CD4-positive, alpha-beta memory T cell (primary cell): ENCODE measurements at regions of chr1 and their contacts with region 1.

Region 1: DNA sequence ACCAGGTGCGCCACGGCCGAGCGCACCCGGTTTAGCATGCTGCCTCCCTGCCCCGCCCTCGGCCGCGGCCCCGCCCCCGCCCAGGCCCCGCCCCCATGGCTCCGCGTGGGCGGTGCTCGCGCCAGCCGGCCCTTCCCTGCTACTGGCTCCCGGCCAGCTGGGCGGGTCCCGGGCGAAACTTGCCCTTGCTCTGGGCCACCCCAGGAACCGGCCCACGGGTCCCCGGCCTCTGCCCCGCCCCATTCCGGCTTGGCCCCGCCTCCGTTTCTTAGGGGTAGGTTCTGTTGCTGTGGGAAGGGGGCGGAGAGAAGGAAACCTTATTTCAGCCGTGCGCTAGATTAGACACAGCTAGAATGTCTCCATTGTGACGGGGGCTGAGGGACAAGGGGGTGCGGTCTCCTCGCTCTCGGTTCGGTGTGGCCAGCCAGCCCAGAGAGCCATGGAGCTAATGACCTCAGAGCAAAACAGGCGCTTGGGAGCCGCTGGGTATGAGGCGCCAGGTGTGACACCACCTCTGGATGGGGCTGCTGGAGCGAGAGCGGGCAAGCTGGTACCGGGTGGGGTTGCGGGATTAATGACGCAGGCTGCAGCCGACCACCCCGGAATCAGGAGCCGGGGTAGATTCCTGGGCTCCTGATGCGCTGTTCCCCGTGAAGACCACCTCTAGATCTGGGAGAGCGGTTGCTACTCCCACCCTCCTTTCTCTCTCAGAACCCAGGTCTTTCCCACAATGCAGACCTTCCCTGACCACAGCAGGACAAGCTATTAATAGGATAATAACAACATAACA is at the start of gene PPM1J:
- DNase-seq: peak; percentile 96 to 97 (median 97)
- H3K4me3 ChIP-seq: peak within 1 kb of the TSS; percentile 58 to 72
- H3K4me3 Mint-ChIP-seq: peak within 1 kb of the TSS; percentile 81 to 96 (median 93)
- H3K27ac ChIP-seq: peak within 1 kb of the TSS; percentile 43
- H3K27ac Mint-ChIP-seq: peak within 1 kb of the TSS; percentile 81 to 96 (median 93)
- H3K4me1 ChIP-seq: peaks cover 22% of the 10 kb centered on the region
- H3K4me1 Mint-ChIP-seq: peaks cover 12 to 29% (median 19%) of the 10 kb centered on the region in 4 donors
- H3K27me3 ChIP-seq: peaks cover 8% of the 10 kb centered on the region
- H3K27me3 Mint-ChIP-seq: peaks cover 0 to 2% of the 10 kb centered on the region in 2 donors
- total RNA-seq, gene PPM1J: 0.76 TPM in 1 of 2 experiments, not detected in the other

Region 2: DNA sequence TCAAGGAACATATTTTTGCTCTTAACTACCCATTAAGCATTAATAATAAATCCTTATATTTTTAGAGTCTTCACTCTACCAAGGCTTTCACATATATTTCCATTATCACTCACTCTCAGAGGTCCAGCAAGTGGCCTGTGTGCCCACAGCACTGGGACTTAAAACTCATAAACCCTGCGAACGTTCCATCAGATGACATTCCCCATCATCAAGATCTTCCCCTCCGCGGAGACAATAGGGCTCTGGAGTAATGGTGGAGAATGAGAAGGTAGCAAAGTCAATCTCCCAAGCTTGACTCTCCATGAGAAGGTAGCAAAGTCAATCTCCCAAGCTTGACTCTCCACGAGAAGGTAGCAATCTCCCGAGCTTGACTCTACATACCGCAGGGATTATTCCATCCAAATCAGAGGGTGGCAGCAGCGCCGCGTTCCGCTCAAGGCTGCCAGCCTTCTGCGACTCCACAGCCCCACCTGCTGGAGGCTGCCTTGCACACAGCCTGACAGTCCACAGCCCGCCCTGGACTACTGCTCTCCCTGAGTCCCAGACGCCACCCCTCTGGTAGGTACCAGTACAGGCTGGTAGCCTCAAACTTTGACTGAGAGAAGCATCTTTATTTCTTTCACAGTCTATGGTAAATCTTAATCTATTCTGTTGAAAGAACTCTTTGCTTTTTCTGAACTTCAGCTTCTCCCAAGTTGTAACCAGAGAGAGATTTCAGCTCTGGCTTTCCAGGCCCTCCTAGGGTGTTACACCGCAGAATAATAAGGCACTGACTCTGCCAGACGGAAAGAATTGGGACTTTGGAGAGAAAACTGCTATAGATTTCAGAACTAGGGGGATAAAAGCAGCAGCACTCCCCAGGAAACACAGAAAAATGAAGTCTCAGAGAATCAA is 345.8 kb before region 1 on chr1:
- CTCF ChIA-PET with region 1: no interaction called
- POLR2A ChIA-PET with region 1: no interaction called
- intact Hi-C with region 1: no loop called
- DNase-seq: peak; percentile 69 to 76 (median 71)
- H3K4me3 ChIP-seq: no peak overlapping the region
- H3K4me3 Mint-ChIP-seq: peak overlapping the region in 5 of 8 donors; percentile 13 to 49 (median 26)
- H3K27ac ChIP-seq: no peak overlapping the region
- H3K27ac Mint-ChIP-seq: no peak overlapping the region
- H3K4me1 ChIP-seq: peaks cover 4% of the 10 kb centered on the region
- H3K4me1 Mint-ChIP-seq: peaks cover 3 to 5% (median 4%) of the 10 kb centered on the region in 4 donors
- H3K27me3 ChIP-seq: no peaks in the 10 kb centered on the region
- H3K27me3 Mint-ChIP-seq: peaks cover 28 to 32% of the 10 kb centered on the region in 2 donors

Region 3: DNA sequence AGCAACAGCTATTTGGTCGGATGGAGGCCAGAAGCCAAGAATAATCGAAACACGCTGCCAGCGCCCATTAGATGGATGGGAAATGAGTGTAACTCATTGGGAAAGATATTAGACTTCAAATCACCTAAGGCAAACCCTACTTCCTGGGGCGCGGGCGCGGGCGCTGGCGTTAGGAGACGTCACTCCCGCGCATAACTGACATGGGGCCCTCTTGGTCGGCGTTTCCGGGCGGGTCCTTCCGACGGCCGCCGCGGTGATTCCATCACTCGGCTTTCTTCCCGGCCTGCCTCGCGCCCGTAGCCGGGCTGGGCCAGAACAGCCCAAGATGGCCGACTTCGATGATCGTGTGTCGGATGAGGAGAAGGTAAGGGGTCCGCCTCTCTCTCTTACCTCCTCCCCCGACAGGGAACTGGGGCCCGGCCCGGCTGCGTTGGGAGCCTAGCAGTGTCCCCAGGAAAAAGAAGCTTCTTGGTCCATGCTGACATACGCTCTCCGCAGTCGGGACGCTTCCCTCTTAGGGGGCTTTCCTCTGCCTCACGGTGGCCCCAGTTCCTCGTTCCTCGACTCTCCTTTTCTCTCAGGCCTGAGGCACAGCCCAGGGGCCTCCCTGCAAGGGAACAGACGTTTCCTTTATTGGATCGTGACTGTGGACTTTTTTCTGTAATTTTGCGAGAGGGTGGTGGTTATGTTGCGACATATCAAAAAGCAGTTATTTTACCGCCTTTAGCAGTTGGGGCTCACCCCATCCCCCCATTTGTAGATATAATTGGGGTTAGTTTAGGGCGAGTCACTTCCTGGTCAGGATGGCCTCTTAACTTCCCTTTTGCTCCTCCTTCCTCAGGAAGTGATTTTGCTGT is 95.7 kb before region 1 on chr1 and contains the start of gene CAPZA1:
- CTCF ChIA-PET with region 1: interaction called, 3 read pairs
- POLR2A ChIA-PET with region 1: interaction called, 36 read pairs
- intact Hi-C with region 1: no loop called
- DNase-seq: peak; percentile 92 to 94 (median 94)
- H3K4me3 ChIP-seq: peak within 1 kb of the TSS; percentile 83 to 98
- H3K4me3 Mint-ChIP-seq: peak within 1 kb of the TSS; percentile 94 to 100 (median 99)
- H3K27ac ChIP-seq: peak within 1 kb of the TSS; percentile 100
- H3K27ac Mint-ChIP-seq: peak within 1 kb of the TSS; percentile 96 to 100 (median 100)
- H3K4me1 ChIP-seq: peaks cover 55% of the 10 kb centered on the region
- H3K4me1 Mint-ChIP-seq: peaks cover 27 to 71% (median 40%) of the 10 kb centered on the region in 4 donors
- H3K27me3 ChIP-seq: no peaks in the 10 kb centered on the region
- H3K27me3 Mint-ChIP-seq: no peaks in the 10 kb centered on the region
- total RNA-seq, gene CAPZA1: 149 to 157 TPM

Region 4: DNA sequence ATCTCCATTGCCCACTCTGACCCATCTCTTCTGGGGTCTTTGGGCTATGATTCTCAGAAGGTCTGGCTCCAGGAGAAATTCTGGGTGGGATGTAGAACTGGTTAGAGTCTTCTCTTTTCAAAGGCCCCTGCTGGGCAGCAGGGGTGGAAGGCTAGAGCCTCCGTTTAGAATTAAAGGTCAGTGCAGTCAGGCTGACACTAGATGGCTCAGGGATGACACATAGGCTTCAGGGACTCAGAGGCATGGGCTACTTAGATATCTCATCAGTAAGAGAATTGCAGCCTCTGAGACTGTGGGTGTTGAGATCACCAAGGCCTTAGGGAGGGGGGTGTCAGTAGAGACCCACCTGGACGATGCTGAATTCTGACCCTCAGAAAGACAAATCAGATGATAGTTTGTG is 12.3 kb after region 1 on chr1:
- CTCF ChIA-PET with region 1: interaction called, 28 read pairs
- POLR2A ChIA-PET with region 1: no interaction called
- intact Hi-C with region 1: no loop called
- DNase-seq: no peak
- H3K4me3 ChIP-seq: no peak overlapping the region
- H3K4me3 Mint-ChIP-seq: no peak overlapping the region
- H3K27ac ChIP-seq: no peak overlapping the region
- H3K27ac Mint-ChIP-seq: peak overlapping the region in 1 of 7 donors; percentile 42
- H3K4me1 ChIP-seq: peaks cover 5% of the 10 kb centered on the region
- H3K4me1 Mint-ChIP-seq: peaks cover 4 to 9% (median 7%) of the 10 kb centered on the region in 4 donors
- H3K27me3 ChIP-seq: no peaks in the 10 kb centered on the region
- H3K27me3 Mint-ChIP-seq: peaks cover 0 to 7% of the 10 kb centered on the region in 2 donors

Region 5: DNA sequence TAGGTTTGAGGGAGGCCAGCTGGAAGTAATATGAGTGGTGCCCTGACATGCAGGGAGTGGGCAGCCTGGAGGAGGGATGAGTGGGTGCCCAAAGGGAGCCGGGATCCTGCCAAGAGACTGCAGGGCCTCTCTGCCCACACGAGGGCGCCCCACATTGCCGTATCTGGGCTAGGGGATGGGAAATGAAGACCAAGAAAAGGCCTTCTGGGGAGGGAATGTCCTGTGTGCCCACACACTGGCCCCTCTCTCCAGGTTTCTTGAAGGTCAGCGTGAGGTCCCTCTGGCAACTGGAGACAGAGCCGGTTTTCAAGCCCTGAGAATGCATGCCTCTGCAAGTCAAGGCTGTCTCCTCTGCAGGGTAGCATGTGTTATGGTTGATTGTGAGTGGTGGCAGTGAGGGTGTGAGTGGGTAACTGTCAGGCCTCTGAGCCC is 93.8 kb after region 1 on chr1:
- CTCF ChIA-PET with region 1: interaction called, 47 read pairs
- POLR2A ChIA-PET with region 1: interaction called, 4 read pairs
- intact Hi-C with region 1: loop called (anchors 1 kb)
- DNase-seq: peak; percentile 25 to 50 (median 44)
- H3K4me3 ChIP-seq: no peak overlapping the region
- H3K4me3 Mint-ChIP-seq: no peak overlapping the region
- H3K27ac ChIP-seq: no peak overlapping the region
- H3K27ac Mint-ChIP-seq: no peak overlapping the region
- H3K4me1 ChIP-seq: no peaks in the 10 kb centered on the region
- H3K4me1 Mint-ChIP-seq: peaks cover 0 to 1% (median 0%) of the 10 kb centered on the region in 4 donors
- H3K27me3 ChIP-seq: no peaks in the 10 kb centered on the region
- H3K27me3 Mint-ChIP-seq: peaks cover 0 to 2% of the 10 kb centered on the region in 2 donors

Region 6: DNA sequence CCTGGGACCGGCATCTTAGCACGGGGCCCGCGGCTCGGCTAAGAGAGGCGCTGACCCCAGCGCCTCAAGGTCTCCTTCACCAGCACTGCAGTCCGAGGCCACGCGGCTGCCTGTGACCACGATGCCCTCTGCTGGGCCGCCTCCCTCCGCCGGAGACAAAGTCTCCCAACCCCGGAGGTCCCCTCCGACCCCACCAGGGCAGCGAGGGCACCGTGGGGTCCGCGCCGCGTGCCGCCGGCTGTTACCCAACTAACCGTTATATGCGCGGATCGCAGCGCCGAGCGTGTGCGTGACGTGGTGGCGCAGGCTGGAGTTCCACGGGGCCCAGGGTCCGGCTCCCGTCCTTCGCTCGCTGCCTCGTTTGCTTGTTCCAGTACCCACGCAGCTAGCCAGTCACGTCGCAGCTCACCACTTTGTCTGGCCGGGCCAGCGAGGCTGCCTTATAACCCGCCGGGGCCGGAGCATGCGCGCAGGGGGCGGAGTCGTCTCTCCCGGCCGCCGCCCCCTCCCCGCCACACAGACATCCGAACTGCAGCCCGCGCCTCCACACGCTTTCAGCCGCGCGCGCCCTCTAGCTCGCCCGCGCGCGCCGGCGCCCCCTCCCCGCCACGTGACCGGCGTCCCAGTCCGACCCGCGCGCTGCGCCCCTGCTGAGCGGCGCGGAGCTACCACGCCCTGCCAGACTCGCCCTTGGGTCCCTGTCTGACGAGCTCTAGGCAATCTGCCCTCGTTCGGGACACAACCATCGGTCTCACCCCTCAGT is 240.5 kb after region 1 on chr1 and contains the start of gene SLC16A1:
- CTCF ChIA-PET with region 1: interaction called, 9 read pairs
- POLR2A ChIA-PET with region 1: interaction called, 6 read pairs
- intact Hi-C with region 1: loop called (anchors 1 kb)
- DNase-seq: peak; percentile 85 to 89 (median 87)
- H3K4me3 ChIP-seq: peak within 1 kb of the TSS; percentile 59 to 96
- H3K4me3 Mint-ChIP-seq: peak within 1 kb of the TSS; percentile 76 to 99 (median 97)
- H3K27ac ChIP-seq: peak within 1 kb of the TSS; percentile 80
- H3K27ac Mint-ChIP-seq: peak within 1 kb of the TSS; percentile 68 to 98 (median 95)
- H3K4me1 ChIP-seq: peaks cover 34% of the 10 kb centered on the region
- H3K4me1 Mint-ChIP-seq: peaks cover 38 to 73% (median 52%) of the 10 kb centered on the region in 4 donors
- H3K27me3 ChIP-seq: no peaks in the 10 kb centered on the region
- H3K27me3 Mint-ChIP-seq: no peaks in the 10 kb centered on the region
- total RNA-seq, gene SLC16A1: 9.7 to 12.7 TPM

Region 7: GRCh38 chr1:113389953-113390834 is 674.7 kb after region 1 on chr1 and contains the start of gene MAGI3:
- CTCF ChIA-PET with region 1: interaction called, 3 read pairs
- POLR2A ChIA-PET with region 1: no interaction called
- intact Hi-C with region 1: loop called (anchors 5 kb)
- DNase-seq: peak; percentile 92 to 94 (median 93)
- H3K4me3 ChIP-seq: peak within 1 kb of the TSS; percentile 44 to 89
- H3K4me3 Mint-ChIP-seq: peak within 1 kb of the TSS; percentile 88 to 98 (median 92)
- H3K27ac ChIP-seq: peak within 1 kb of the TSS; percentile 60
- H3K27ac Mint-ChIP-seq: peak within 1 kb of the TSS; percentile 80 to 95 (median 91)
- H3K4me1 ChIP-seq: peaks cover 30% of the 10 kb centered on the region
- H3K4me1 Mint-ChIP-seq: peaks cover 20 to 36% (median 23%) of the 10 kb centered on the region in 4 donors
- H3K27me3 ChIP-seq: no peaks in the 10 kb centered on the region
- H3K27me3 Mint-ChIP-seq: no peaks in the 10 kb centered on the region
- total RNA-seq, gene MAGI3: 6.5 to 6.7 TPM

Region 8: GRCh38 chr1:113677250-113678158 is 962.0 kb after region 1 on chr1:
- CTCF ChIA-PET with region 1: interaction called, 11 read pairs
- POLR2A ChIA-PET with region 1: no interaction called
- intact Hi-C with region 1: loop called (anchors 1 kb)
- DNase-seq: peak in 4 of 5 donors; percentile 16 to 29 (median 28)
- H3K4me3 ChIP-seq: no peak overlapping the region
- H3K4me3 Mint-ChIP-seq: no peak overlapping the region
- H3K27ac ChIP-seq: no peak overlapping the region
- H3K27ac Mint-ChIP-seq: no peak overlapping the region
- H3K4me1 ChIP-seq: no peaks in the 10 kb centered on the region
- H3K4me1 Mint-ChIP-seq: peaks cover 0 to 2% (median under 1%) of the 10 kb centered on the region in 4 donors
- H3K27me3 ChIP-seq: no peaks in the 10 kb centered on the region
- H3K27me3 Mint-ChIP-seq: no peaks in the 10 kb centered on the region